ENCODE measurements at regions of chr2 and their contacts with region 1.

Region 1: DNA sequence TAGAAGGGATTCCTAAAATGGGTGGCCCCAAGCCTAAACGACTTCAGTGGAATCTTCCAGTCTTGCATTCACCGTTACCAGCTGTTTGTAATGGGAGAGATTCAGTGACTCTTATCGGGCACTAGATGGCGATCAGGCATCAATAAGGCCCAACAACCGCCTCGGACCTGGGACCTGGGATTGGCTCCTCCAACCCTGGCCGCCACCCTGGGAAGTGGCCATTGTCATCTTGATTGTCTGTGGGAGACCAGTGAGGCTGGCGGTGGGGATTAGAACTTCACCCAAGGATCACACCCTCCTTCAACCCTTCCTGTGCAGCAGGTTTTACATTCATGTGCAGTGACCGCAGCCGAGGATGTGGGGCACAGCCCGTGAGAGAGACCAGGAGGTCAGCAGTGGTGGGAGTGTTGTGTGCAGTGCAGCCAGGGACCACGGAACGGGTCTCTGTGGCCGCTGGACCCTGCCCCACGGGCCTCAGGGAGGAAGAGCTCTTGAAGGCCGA is 85.3 kb downstream of the SPP2 start:
- DNase-seq: peak; percentile 33
- H3K4me3 Mint-ChIP-seq: no peak overlapping the region
- H3K27ac Mint-ChIP-seq: no peak overlapping the region
- H3K4me1 Mint-ChIP-seq: peaks cover 20% of the 10 kb centered on the region
- H3K27me3 Mint-ChIP-seq: peaks cover 14% of the 10 kb centered on the region

Region 2: DNA sequence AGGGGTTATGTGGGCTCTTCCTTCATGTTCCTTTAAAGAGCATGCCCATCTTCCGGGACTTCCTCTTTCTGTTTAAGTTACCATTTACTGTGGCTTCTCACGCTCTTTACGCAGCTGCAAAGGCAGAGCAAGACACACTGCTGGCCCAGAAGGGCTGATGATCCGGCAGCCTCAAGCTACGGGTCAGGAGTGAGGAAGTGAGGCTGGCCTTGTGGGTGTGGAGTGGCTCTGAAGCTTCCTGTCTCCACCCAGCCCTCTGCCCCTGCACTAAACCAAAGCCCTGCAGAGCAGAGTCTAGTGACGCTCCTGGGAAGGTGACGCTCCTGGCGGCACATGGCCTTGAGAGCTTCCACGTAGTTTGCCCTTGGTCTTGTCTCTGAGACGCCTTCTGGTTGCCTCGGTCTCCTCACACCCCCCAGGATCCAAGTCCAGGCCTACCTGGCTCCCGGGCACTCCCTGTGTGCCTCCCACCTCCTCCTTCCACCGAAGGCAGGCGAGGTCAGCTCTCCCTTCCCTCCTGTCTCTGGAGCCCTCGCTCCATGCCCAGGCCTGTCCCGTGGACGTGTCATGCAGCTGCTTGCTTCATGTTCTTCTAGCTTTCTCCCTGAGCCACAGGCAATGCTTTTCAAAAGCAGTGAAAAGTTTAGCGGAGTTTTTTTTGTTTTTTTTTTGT is 310.8 kb after region 1 on chr2:
- intact Hi-C with region 1: loop called (anchors 2 kb)
- DNase-seq: peak; percentile 85
- H3K4me3 Mint-ChIP-seq: peak overlapping the region; percentile 53
- H3K27ac Mint-ChIP-seq: peak overlapping the region; percentile 96
- H3K4me1 Mint-ChIP-seq: peaks cover 77% of the 10 kb centered on the region
- H3K27me3 Mint-ChIP-seq: no peaks in the 10 kb centered on the region

Region 3: GRCh38 chr2:234500394-234501006 is 364.7 kb after region 1 on chr2:
- intact Hi-C with region 1: loop called (anchors 1 kb)
- DNase-seq: peak; percentile 66
- H3K4me3 Mint-ChIP-seq: no peak overlapping the region
- H3K27ac Mint-ChIP-seq: no peak overlapping the region
- H3K4me1 Mint-ChIP-seq: peaks cover 31% of the 10 kb centered on the region
- H3K27me3 Mint-ChIP-seq: peaks cover 18% of the 10 kb centered on the region

Region 4: DNA sequence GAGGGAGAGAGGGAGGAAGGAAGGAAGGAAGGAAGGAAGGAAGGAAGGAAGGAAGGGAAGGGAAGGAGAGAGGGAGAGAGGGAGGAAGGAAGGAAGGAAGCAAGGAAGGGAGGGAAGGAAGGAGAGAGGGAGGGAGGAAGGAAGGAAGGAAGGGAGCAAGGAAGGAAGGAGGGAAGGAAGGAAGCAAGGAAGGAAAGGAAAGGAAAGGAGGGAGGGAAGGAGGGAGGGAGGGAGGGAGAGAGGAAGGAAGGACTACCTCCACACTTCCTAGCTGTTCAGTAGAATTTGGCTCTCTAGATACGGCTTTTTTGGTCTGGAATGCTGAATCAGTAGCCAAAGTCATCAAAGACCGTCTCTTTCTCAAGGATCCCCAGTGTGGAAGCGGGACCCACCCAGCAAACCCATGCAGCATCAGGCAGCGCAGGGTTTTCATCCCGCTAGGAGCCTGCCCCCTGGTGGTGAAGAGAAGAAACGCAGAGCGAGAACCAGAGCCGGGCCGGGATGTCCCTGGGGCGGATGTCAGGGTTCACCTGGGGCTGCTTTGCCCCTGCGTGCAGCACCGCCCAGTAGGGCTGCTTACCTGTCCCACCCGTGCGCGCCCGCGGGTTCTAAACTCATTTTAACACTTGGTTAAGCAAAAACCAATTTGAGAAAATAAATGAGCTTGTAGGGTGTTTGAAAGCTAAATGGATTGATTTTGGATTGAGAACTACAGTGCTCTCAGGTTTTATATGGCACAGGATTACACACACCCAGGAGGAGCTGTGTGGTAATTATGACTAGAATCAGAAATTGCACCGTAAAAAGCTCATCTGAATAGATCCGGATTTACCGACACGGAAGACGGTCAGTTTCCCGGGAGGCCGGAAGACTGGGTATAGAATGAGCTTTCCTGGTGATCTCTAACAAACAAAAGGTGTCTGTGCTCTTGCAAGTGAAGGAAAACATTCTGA is 409.2 kb after region 1 on chr2:
- intact Hi-C with region 1: loop called (anchors 1 kb)
- DNase-seq: peak; percentile 69
- H3K4me3 Mint-ChIP-seq: no peak overlapping the region
- H3K27ac Mint-ChIP-seq: no peak overlapping the region
- H3K4me1 Mint-ChIP-seq: no peaks in the 10 kb centered on the region
- H3K27me3 Mint-ChIP-seq: peaks cover 40% of the 10 kb centered on the region

Measured in activated T-helper 2 cell treated with anti-CD3 and anti-CD28 coated beads, Interferon-gamma antibody, Interleukin-2, Interleukin-4, amounts not matched to agents 10 μg/mL and 5 μg/mL and 100 μg/mL, durations not matched to agents 14 hours and 24 hours and 36 hours (primary cell).